B cell (primary cell): ENCODE measurements at regions of chrX and their contacts with region 1.

Region 1: DNA sequence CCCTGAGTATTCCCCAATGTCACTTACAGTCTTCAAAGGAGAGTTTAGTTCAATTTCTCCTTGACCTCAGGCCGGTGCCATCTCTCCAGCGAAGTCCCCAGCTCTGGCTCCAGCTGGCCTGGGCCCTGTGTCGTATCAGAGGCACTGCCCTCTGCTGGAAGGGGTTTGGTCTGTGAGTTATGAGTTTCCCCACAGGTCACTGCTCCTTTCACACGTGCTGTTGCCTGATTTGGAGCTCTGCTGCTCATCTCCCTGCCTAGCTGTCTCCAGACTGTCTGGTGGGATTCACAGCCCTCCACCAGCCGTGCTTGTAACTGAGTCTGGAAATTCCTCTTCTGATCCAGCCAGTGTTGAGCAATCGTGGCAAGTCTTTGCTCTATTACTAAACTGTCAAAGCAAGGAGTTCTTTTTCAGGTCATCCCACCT is at the start of gene RAP2C:
- DNase-seq: peak; percentile 73
- ATAC-seq: peak; percentile 26
- H3K4me3 ChIP-seq: peak within 1 kb of the TSS; percentile 58 to 82 (median 66)
- H3K4me3 Mint-ChIP-seq: peak within 1 kb of the TSS; percentile 93
- H3K27ac ChIP-seq: peak within 1 kb of the TSS; percentile 92 to 96
- H3K27ac Mint-ChIP-seq: peak within 1 kb of the TSS; percentile 93
- H3K4me1 ChIP-seq: peaks cover 9 to 18% of the 10 kb centered on the region in 2 donors
- H3K4me1 Mint-ChIP-seq: peaks cover 31% of the 10 kb centered on the region
- H3K27me3 ChIP-seq: no peaks in the 10 kb centered on the region
- H3K27me3 Mint-ChIP-seq: no peaks in the 10 kb centered on the region
- CTCF ChIP-seq: peak; percentile 46
- total RNA-seq, gene RAP2C: 46.0 and 56.0 TPM in 2 replicates

Region 2: GRCh38 chrX:131841496-131842410 is 377.6 kb before region 1 on chrX:
- CTCF ChIA-PET with region 1: interaction called, 35 read pairs
- POLR2A ChIA-PET with region 1: interaction called, 3 read pairs
- intact Hi-C with region 1: loop called (anchors 1 kb)
- DNase-seq: peak; percentile 66
- ATAC-seq: peak; percentile 67
- H3K4me3 ChIP-seq: no peak overlapping the region
- H3K4me3 Mint-ChIP-seq: no peak overlapping the region
- H3K27ac ChIP-seq: no peak overlapping the region
- H3K27ac Mint-ChIP-seq: no peak overlapping the region
- H3K4me1 ChIP-seq: peaks cover 6 to 7% of the 10 kb centered on the region in 2 donors
- H3K4me1 Mint-ChIP-seq: peaks cover 3% of the 10 kb centered on the region
- H3K27me3 ChIP-seq: no peaks in the 10 kb centered on the region
- H3K27me3 Mint-ChIP-seq: no peaks in the 10 kb centered on the region
- CTCF ChIP-seq: peak; percentile 73

Region 3: DNA sequence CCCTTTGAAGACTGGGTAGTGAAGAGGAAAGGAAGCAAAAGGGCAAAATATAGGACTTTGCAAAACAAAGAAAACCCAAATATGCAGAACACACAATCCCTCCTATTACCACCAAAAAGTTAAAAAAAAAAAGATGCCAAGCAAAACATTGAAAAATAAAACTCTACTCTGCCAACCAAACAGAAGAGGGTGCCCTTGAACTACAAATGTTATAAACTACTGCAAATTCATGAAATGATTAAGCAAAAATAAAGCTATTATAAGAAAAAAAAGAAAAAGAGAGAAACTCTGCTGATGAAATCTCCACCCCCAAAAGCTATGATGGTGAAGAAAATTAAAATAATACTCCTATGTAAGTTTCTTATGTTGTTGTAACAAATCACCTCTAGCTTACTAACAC is 364.8 kb before region 1 on chrX:
- CTCF ChIA-PET with region 1: interaction called, 8 read pairs
- POLR2A ChIA-PET with region 1: no interaction called
- intact Hi-C with region 1: loop called (anchors 1 kb)
- DNase-seq: peak; percentile 31
- ATAC-seq: no peak
- H3K4me3 ChIP-seq: no peak overlapping the region
- H3K4me3 Mint-ChIP-seq: no peak overlapping the region
- H3K27ac ChIP-seq: no peak overlapping the region
- H3K27ac Mint-ChIP-seq: no peak overlapping the region
- H3K4me1 ChIP-seq: no peaks in the 10 kb centered on the region
- H3K4me1 Mint-ChIP-seq: no peaks in the 10 kb centered on the region
- H3K27me3 ChIP-seq: peaks cover 0 to 2% (median 0%) of the 10 kb centered on the region in 4 experiments
- H3K27me3 Mint-ChIP-seq: no peaks in the 10 kb centered on the region
- CTCF ChIP-seq: peak; percentile 34

Region 4: GRCh38 chrX:131987252-131987651 is 232.1 kb before region 1 on chrX:
- CTCF ChIA-PET with region 1: interaction called, 11 read pairs
- POLR2A ChIA-PET with region 1: no interaction called
- intact Hi-C with region 1: loop called (anchors 1 kb)
- DNase-seq: peak; percentile 74
- ATAC-seq: peak; percentile 93
- H3K4me3 ChIP-seq: peak overlapping the region in 3 of 5 experiments; percentile 3 to 30 (median 30)
- H3K4me3 Mint-ChIP-seq: peak overlapping the region; percentile 61
- H3K27ac ChIP-seq: peak overlapping the region; percentile 83 to 87
- H3K27ac Mint-ChIP-seq: peak overlapping the region; percentile 98
- H3K4me1 ChIP-seq: peaks cover 42 to 45% of the 10 kb centered on the region in 2 donors
- H3K4me1 Mint-ChIP-seq: peaks cover 53% of the 10 kb centered on the region
- H3K27me3 ChIP-seq: no peaks in the 10 kb centered on the region
- H3K27me3 Mint-ChIP-seq: no peaks in the 10 kb centered on the region
- CTCF ChIP-seq: no peak

Region 5: GRCh38 chrX:132022967-132023895 is 196.1 kb before region 1 on chrX and contains the start of gene STK26:
- CTCF ChIA-PET with region 1: interaction called, 10 read pairs
- POLR2A ChIA-PET with region 1: interaction called, 6 read pairs
- intact Hi-C with region 1: loop called (anchors 2 kb)
- DNase-seq: peak; percentile 80
- ATAC-seq: peak; percentile 84
- H3K4me3 ChIP-seq: peak within 1 kb of the TSS; percentile 64 to 81 (median 75)
- H3K4me3 Mint-ChIP-seq: peak within 1 kb of the TSS; percentile 96
- H3K27ac ChIP-seq: peak within 1 kb of the TSS; percentile 66 to 77
- H3K27ac Mint-ChIP-seq: peak within 1 kb of the TSS; percentile 91
- H3K4me1 ChIP-seq: peaks cover 8 to 19% of the 10 kb centered on the region in 2 donors
- H3K4me1 Mint-ChIP-seq: peaks cover 31% of the 10 kb centered on the region
- H3K27me3 ChIP-seq: no peaks in the 10 kb centered on the region
- H3K27me3 Mint-ChIP-seq: no peaks in the 10 kb centered on the region
- CTCF ChIP-seq: no peak
- total RNA-seq, gene STK26: 32.1 and 34.6 TPM in 2 replicates

Region 6: DNA sequence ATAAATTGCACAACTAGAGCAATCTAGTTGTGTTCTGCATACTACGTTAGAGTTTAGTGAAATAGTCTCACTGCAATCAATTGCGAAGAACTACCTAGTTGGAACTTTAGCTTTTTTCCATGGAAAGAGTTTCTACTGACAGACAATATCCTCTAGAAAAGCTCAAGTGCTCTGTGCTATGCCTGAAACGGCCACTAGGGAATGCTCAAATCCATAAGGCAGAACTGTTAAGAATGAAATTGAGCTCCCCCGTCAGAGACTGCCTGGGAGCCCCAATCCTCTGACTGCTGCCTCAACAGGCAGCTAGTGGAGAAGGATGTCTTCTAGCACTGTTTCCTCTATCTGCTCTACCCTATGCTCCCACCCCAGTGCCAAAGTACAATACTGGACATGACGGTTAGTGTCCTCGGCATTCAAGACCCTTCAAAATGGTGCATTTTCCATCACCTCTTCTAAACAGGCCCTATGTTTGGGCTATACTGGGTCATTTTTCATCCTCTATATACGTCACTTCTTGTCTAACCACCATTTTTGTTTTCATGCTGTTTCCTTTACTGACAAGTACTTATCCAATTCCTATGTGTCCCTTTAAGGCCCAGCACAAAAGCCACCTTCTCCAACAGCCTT is 126.8 kb before region 1 on chrX:
- CTCF ChIA-PET with region 1: interaction called, 32 read pairs
- POLR2A ChIA-PET with region 1: no interaction called
- intact Hi-C with region 1: loop called (anchors 1 kb)
- DNase-seq: peak; percentile 59
- ATAC-seq: peak; percentile 65
- H3K4me3 ChIP-seq: no peak overlapping the region
- H3K4me3 Mint-ChIP-seq: no peak overlapping the region
- H3K27ac ChIP-seq: no peak overlapping the region
- H3K27ac Mint-ChIP-seq: no peak overlapping the region
- H3K4me1 ChIP-seq: no peaks in the 10 kb centered on the region
- H3K4me1 Mint-ChIP-seq: no peaks in the 10 kb centered on the region
- H3K27me3 ChIP-seq: no peaks in the 10 kb centered on the region
- H3K27me3 Mint-ChIP-seq: peaks cover 3% of the 10 kb centered on the region
- CTCF ChIP-seq: peak; percentile 67

Region 7: DNA sequence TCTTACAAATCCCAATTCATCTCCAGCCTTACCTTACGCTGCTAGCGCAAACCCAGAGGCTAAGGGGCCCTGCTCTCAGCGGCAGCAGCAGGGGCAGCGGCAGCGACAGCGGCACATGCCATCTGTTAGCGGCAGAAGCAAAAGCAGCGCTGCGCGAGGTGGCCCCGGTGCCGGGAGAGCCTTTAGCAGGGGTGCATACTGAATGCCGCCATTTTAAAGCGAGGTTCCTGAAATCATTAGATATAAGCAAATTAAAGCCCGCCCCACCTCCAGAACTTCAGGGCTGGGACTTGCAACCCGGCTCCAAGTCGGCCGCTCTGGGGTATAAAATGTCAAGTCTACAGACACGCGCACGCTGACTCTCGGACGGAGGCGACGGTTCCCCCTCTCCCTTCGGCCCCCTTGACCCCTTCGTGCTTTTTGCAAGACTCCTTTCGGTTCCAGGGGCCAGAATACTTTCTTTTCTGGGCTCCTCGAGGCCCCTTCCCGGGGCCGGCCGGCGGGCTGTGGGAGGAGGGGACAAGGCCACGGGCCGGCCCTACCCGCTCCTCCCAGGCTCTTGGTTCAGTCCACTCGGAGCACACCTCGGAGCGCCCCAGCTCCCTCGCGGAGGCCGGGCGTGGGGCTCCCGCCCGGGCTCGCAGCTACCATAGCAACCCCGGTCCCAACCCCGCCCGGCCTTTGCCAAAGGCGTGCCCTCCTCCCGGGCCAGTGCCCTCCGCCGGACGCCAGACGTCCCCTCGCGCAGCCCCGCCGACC is 269.6 kb after region 1 on chrX and contains the start of gene MBNL3:
- CTCF ChIA-PET with region 1: no interaction called
- POLR2A ChIA-PET with region 1: interaction called, 3 read pairs
- intact Hi-C with region 1: loop called (anchors 1 kb)
- DNase-seq: peak; percentile 87
- ATAC-seq: peak; percentile 67
- H3K4me3 ChIP-seq: peak within 1 kb of the TSS; percentile 61 to 76 (median 66)
- H3K4me3 Mint-ChIP-seq: peak within 1 kb of the TSS; percentile 95
- H3K27ac ChIP-seq: peak within 1 kb of the TSS; percentile 85 to 87
- H3K27ac Mint-ChIP-seq: peak within 1 kb of the TSS; percentile 98
- H3K4me1 ChIP-seq: peaks cover 51 to 53% of the 10 kb centered on the region in 2 donors
- H3K4me1 Mint-ChIP-seq: peaks cover 51% of the 10 kb centered on the region
- H3K27me3 ChIP-seq: no peaks in the 10 kb centered on the region
- H3K27me3 Mint-ChIP-seq: no peaks in the 10 kb centered on the region
- CTCF ChIP-seq: no peak
- total RNA-seq, gene MBNL3: 60.2 and 63.1 TPM in 2 replicates